ENCODE measurements at regions of chr3 and their contacts with region 1.

Region 1: GRCh38 chr3:32045091-32045964 is 61.1 kb upstream of the GPD1L start:
- DNase-seq: peak; percentile 53 to 77
- ATAC-seq: peak; percentile 87 to 91
- H3K4me3 ChIP-seq: peak overlapping the region; percentile 7; the same call in 1 of the 3 replicates
- H3K27ac ChIP-seq: peak overlapping the region; percentile 70 to 80
- H3K4me1 ChIP-seq: peaks cover 22% of the 10 kb centered on the region
- CTCF ChIP-seq: no peak
- EP300 ChIP-seq: 0 out of 5 replicates have a peak, but pooled peaks of 1 of the 2 experiments have one; percentile 26
- POLR2A ChIP-seq: no peak
- RAD21 ChIP-seq: no peak

Region 2: DNA sequence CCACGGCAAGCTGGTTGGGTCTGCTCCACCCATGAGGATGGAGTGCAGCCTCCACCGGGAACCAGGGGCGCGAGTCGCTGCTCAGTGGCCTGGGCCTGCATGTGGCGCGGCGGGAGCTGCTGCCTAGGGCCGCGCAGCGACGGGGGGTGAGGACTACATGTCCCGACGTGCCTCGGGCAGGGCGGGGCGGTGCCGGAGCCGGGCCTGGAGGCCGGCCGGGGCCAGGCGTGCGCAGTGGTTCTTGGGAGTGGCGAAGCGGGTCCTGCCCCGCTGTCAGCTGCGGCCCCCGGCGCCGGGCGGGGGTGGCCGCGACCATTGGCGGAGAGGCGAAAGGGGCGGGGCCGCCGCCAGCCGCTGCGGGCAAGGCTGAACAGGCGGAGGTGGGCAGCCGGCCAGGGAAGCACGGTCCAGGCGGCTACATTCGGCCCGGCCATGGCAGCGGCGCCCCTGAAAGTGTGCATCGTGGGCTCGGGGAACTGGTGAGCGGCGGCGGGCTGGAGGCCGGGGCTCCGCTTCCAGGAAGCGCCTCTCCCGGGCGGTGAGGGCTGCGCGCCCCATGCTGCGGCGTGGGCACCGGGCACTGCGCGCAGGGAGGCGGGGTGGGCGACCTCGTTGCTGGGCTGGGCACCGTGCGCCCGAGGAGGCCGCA is 61.1 kb after region 1 on chr3 and contains the start of gene GPD1L:
- CTCF ChIA-PET with region 1: interaction called, 3 read pairs
- POLR2A ChIA-PET with region 1: interaction called, 13 read pairs
- DNase-seq: peak; percentile 78 to 95
- ATAC-seq: peak; percentile 91 to 97
- H3K4me3 ChIP-seq: peak within 1 kb of the TSS; percentile 95
- H3K27ac ChIP-seq: peak within 1 kb of the TSS; percentile 88 to 91
- H3K4me1 ChIP-seq: peaks cover 53% of the 10 kb centered on the region
- CTCF ChIP-seq: no peak
- EP300 ChIP-seq: no peak
- POLR2A ChIP-seq: peak; percentile 22
- RAD21 ChIP-seq: no peak
- polyA plus RNA-seq, gene GPD1L: 30.6 and 31.0 TPM in 2 replicates

Measured in A549 (cell line).